Head of caudate nucleus (tissue), 42 donors: ENCODE measurements at regions of chr17 and their contacts with region 1.

Region 1: GRCh38 chr17:21007646-21008045 is 35.2 kb downstream of the USP22 start:
- DNase-seq: peak in 19 of 42 donors; percentile 26 to 78 (median 55)

Region 2: GRCh38 chr17:20852239-20852989 is 155.2 kb before region 1 on chr17:
- intact Hi-C with region 1: no loop called
- DNase-seq: peak in 36 of 42 donors; percentile 19 to 67 (median 43)

Region 3: DNA sequence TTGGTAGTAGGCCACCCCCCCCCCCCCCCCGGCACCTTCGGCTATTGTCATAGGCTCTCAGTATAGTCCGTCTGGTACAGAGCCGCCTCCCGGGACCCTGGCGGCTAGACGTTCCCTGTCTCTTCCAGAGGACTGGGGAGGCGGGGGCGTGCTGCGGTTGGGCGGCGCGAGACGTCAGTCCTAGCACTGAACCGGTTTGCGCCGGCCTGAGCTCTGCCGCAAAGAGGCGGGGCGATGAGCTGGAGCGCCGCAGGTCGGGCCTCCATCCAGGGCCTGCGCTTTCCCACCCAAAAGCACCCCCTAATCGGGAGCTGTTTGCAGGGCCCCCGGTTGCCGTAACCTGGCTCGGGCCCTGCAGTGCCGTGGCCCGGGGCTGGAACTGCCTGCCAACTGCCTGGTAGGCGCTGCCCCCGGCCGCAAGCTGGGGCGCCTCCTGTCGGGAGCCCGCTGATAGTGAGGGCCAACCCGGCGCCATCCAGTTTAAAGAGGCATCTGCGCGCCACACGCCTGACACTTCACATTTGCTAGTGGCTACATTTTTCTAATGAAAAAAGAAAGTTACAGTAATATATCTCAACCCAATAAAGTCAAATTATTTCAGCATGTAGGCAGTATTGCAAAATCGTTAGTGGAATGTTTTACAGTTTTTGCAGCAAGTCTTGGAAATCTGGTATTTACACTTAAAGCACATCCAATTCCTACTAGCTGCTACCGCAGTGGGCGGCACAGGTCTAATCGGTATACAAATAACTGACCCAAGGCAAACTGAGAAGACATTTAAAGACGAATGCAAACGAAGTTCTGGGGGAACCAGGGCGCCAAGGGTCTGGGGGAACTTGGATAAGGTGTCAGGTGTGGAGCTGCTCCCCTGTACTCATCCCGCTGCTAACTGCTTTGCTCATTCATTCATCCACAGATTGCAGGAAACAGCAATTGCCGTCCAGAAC is 35.9 kb after region 1 on chr17:
- intact Hi-C with region 1: loop called (anchors 5 kb)
- DNase-seq: peak; percentile 94 to 100 (median 99)